Mammary epithelial cell (primary cell): ENCODE measurements at regions of chr22 and their contacts with region 1.

Region 1: GRCh38 chr22:28829358-28830181 is 29.2 kb upstream of the XBP1 start:
- DNase-seq: peak; percentile 35
- H3K4me3 ChIP-seq: no peak overlapping the region
- H3K27ac ChIP-seq: no peak overlapping the region
- H3K4me1 ChIP-seq: no peaks in the 10 kb centered on the region
- H3K27me3 ChIP-seq: no peaks in the 10 kb centered on the region
- CTCF ChIP-seq: peak; percentile 98

Region 2: DNA sequence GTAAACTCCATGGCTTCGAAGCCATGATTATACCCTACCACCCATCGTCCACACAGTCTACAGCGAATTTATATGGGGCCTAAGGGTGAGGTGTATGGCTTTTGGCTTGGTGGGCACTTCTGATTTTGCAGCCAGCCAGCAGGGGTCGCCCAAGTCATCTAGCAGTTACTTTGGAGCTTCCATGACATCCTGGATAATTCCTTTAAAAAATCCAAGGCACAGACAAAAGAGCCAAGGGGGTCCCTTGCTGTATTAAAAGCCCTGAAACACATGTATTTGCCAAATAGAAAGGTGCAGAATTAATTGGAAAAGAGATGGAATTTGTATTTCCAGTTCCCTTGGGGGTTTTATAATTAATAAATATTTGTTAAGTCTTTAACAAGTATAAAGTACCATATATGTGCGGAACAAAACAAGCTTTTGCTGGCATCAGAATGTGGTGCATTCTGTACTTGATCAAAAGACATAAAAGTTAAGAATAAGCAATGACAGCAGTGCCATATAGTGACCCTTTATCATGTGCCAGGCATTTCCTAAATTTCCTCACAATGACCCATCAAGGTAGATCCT is 777.7 kb before region 1 on chr22:
- CTCF ChIA-PET with region 1: no interaction called
- dilution Hi-C with region 1: no loop called
- in situ Hi-C with region 1: loop called in 1 of 2 experiments (anchors 25 kb)
- intact Hi-C with region 1: no loop called
- DNase-seq: peak; percentile 25
- H3K4me3 ChIP-seq: no peak overlapping the region
- H3K27ac ChIP-seq: no peak overlapping the region
- H3K4me1 ChIP-seq: no peaks in the 10 kb centered on the region
- H3K27me3 ChIP-seq: peaks cover 2% of the 10 kb centered on the region
- CTCF ChIP-seq: peak; percentile 82 to 91

Region 3: GRCh38 chr22:28772633-28773460 is 56.7 kb before region 1 on chr22 and contains the start of gene CCDC117:
- CTCF ChIA-PET with region 1: no interaction called
- dilution Hi-C with region 1: no loop called
- in situ Hi-C with region 1: no loop called
- intact Hi-C with region 1: loop called (anchors 1 kb)
- DNase-seq: peak; percentile 86
- H3K4me3 ChIP-seq: peak within 1 kb of the TSS; percentile 80 to 96 (median 83)
- H3K27ac ChIP-seq: peak within 1 kb of the TSS; percentile 87
- H3K4me1 ChIP-seq: peaks cover 5% of the 10 kb centered on the region
- H3K27me3 ChIP-seq: no peaks in the 10 kb centered on the region
- CTCF ChIP-seq: peak in 1 of 2 donors; percentile 19
- total RNA-seq, gene CCDC117: 10.6 to 16.0 TPM

Region 4: DNA sequence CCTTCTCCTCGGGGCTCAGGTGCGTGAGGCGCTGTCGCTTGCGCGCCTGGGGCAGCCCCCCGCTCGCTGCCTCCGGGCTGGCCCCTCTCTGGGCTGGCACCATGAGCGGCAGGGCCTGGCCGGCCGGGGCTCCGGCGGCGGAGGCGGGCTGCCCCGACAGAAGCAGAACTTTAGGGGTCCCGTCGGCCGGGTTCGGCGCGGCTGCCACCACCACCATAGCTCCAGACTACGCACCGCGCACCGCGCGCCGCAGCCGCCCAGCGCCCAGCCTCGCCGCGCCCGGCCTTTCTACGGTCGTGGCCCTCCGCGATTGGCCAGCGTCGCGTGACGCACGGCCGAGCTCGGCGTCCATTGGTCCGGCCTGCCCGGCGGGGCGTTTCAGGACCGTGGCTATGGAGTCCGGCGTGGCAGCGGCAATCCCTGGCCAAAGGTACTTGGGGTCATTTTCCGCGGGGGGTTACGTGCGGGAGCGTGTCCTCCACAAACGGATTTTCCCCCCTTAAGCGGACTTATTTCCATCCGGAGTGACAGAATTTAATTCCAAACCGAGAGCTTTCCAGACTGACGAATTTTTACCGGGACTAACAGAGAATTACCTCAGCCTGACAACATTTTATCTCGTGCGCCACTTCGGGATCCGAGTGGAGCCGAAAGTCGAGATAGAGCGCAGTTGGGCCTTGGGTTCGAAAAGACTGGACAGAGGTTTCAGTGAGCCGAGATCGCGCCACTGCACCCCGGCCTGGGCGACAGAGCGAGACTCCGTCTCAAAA is 29.1 kb before region 1 on chr22 and contains the start of gene XBP1:
- CTCF ChIA-PET with region 1: no interaction called
- dilution Hi-C with region 1: no loop called
- in situ Hi-C with region 1: no loop called
- intact Hi-C with region 1: loop called (anchors 1 kb)
- DNase-seq: peak; percentile 95
- H3K4me3 ChIP-seq: peak within 1 kb of the TSS; percentile 67 to 86 (median 72)
- H3K27ac ChIP-seq: peak within 1 kb of the TSS; percentile 98
- H3K4me1 ChIP-seq: peaks cover 10% of the 10 kb centered on the region
- H3K27me3 ChIP-seq: no peaks in the 10 kb centered on the region
- CTCF ChIP-seq: no peak
- total RNA-seq, gene XBP1: 166 to 224 TPM